Heart right ventricle (tissue), 16 donors: ENCODE measurements at regions of chr2 and their contacts with region 1.

Region 1: DNA sequence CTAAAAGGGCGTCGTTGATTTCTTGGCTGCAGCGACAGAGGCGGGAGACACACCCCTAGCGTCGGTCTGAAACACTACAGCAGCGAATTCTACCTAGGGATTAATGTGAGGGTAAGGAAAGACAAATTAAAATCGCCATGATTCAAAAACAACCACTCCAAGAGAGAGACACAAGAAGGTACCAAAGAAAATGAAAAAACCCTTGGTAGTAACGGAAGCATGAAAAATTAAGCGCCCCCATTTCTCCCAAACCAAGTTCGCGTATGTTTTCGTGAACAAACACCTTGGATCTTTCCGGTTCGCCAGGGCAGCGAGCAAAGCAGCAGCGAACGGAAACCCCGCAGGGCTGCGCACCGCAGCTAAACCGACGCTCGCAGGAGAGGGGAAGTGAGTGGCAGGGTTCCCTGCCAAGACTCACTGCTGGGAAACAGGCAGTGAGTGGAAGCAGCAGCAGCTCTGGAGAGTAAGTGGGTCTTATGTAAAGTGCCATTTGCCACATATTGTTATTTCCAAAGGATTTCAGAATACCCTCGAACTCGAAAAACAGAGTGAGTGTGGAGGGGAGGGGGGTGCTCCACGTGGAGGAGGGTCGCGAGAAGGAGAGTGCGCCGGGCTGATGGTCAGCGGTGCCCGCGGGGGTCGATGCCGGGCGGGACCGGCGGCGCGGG is 1.0 kb downstream of the PPP3R1 start:
- DNase-seq: peak; percentile 45 to 76
- ATAC-seq: peak; percentile 42 to 73 (median 64)
- H3K4me3 ChIP-seq: peak overlapping the region; percentile 54 to 83 (median 76)
- H3K27ac ChIP-seq: peak overlapping the region; percentile 85 to 99 (median 93)
- H3K4me1 ChIP-seq: peaks cover 6 to 74% (median 59%) of the 10 kb centered on the region in 9 donors
- H3K27me3 ChIP-seq: no peaks in the 10 kb centered on the region
- CTCF ChIP-seq: peak in 8 of 9 donors; percentile 50 to 80 (median 71)

Region 2: DNA sequence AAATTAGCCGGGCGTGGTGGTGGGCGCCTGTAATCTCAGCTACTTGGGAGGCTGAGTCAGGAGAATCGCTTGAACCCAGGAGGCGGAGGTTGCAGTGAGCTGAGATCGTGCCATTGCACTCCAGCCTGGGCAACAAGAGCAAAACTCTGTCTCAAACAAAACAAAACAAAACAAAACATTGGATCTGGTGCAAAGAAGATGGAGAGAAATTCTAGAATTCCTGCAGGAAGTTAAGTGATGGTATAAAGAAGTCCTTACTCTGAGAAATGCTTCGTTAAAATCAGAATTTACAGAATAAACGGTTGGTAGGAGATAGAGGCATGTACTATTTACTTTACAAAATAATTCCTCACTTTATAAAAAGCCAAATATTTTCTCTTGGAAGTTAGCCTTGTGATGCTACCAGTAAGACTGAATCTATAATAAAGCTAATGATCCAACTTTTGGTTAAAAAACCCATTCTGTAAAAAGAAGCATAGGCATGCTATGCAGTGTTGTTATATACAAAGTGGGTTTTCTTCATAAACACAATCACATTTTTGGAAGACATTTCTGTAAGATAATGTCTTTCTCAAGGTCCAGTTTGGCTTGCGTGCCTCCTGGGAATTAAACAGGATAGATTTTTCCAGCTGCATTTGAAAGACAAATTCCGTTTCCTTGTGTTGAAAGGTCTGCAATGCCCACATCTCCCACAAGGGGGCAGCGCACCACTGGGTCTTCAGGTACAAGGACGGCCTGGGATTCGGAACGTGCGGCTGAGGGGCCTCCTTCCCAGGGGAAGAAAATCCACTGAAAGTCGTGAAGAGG is 129.2 kb before region 1 on chr2:
- intact Hi-C with region 1: loop called in 2 of 10 experiments (anchors 10 kb)
- DNase-seq: peak; percentile 86 to 88
- ATAC-seq: peak in 7 of 8 donors; percentile 64 to 87 (median 84)
- H3K4me3 ChIP-seq: peak overlapping the region in 2 of 10 donors; percentile 5 to 14
- H3K27ac ChIP-seq: no peak overlapping the region
- H3K4me1 ChIP-seq: peaks cover 0 to 13% (median 8%) of the 10 kb centered on the region in 9 donors
- H3K27me3 ChIP-seq: no peaks in the 10 kb centered on the region
- CTCF ChIP-seq: peak in 8 of 9 donors; percentile 92 to 98 (median 98)

Region 3: GRCh38 chr2:68196120-68196716 is 55.1 kb before region 1 on chr2:
- intact Hi-C with region 1: loop called in 8 of 10 experiments (anchors 2 to 10 kb)
- DNase-seq: peak in 1 of 2 donors; percentile 35
- ATAC-seq: peak in 2 of 8 donors; percentile 23 to 52
- H3K4me3 ChIP-seq: no peak overlapping the region
- H3K27ac ChIP-seq: no peak overlapping the region
- H3K4me1 ChIP-seq: peaks cover 0 to 79% (median 25%) of the 10 kb centered on the region in 9 donors
- H3K27me3 ChIP-seq: no peaks in the 10 kb centered on the region
- CTCF ChIP-seq: peak in 8 of 9 donors; percentile 50 to 85 (median 73)

Region 4: DNA sequence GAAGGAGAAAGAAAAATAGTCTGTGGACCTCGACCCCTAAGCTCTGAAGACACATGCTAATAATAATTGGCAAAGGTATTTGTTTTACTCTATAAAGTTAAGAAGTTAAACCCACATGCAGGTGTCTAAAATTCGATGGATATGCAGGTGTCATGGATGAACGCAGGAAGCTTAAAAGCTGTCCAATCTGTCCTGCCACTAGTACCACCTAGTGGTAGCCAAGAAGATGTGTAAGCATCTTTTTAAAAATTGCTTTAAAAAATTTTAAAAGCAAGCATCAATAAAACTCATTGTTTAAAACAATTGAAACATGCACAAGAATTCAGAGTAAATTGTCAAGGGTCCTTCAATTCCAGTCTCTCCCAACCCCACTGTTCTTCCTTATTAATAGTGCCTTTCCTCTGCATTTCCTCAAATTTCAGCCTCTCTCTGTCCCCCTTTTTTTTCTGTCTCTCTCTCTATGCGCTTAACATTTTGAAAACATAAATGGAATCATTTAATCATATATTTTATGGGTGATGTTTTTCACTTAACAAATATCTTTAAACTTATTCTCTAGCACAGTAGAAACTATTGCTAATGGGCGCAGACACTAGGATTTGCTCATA is 31.6 kb after region 1 on chr2:
- intact Hi-C with region 1: loop called in 1 of 10 experiments (anchors 5 kb)
- DNase-seq: no peak
- ATAC-seq: peak in 1 of 8 donors; percentile 59
- H3K4me3 ChIP-seq: no peak overlapping the region
- H3K27ac ChIP-seq: no peak overlapping the region
- H3K4me1 ChIP-seq: peaks cover 0 to 38% (median 18%) of the 10 kb centered on the region in 9 donors
- H3K27me3 ChIP-seq: no peaks in the 10 kb centered on the region
- CTCF ChIP-seq: peak; percentile 49 to 84 (median 74)

Region 5: GRCh38 chr2:68319398-68320117 is 68.2 kb after region 1 on chr2 and contains the start of gene CNRIP1:
- intact Hi-C with region 1: loop called in 2 of 10 experiments (anchors 2 to 5 kb)
- DNase-seq: peak; percentile 77 to 87
- ATAC-seq: peak; percentile 84 to 95 (median 88)
- H3K4me3 ChIP-seq: peak within 1 kb of the TSS; percentile 61 to 93 (median 82)
- H3K27ac ChIP-seq: peak within 1 kb of the TSS; percentile 93 to 99 (median 98)
- H3K4me1 ChIP-seq: peaks cover 0 to 31% (median 20%) of the 10 kb centered on the region in 9 donors
- H3K27me3 ChIP-seq: peaks cover 0 to 27% (median 0%) of the 10 kb centered on the region in 7 donors
- CTCF ChIP-seq: peak in 3 of 9 donors; percentile 12 to 23 (median 20)
- total RNA-seq, gene CNRIP1: 4.8 to 13.4 (median 7.9) TPM

Region 6: DNA sequence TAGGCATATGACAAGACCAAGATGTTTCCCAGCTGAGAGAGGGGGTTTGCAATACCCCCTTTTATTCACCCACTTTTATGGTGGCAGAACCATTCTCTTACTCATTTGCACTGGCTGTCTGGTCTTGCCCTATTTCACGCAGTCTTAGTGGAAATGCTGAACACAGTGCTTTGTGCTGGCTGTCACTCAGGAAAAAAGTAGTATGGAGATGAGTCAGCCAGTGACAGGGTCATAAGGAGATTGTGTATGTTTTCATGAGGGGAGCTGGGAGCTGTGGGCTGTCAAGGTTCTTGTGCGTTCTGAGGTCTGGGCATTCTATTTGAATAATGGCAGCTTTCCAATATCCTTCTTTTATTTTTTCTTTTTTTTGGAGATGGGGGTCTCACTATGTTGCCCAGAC is 79.4 kb after region 1 on chr2:
- intact Hi-C with region 1: no loop called
- DNase-seq: no peak
- ATAC-seq: no peak
- H3K4me3 ChIP-seq: no peak overlapping the region
- H3K27ac ChIP-seq: no peak overlapping the region
- H3K4me1 ChIP-seq: no peaks in the 10 kb centered on the region
- H3K27me3 ChIP-seq: peaks cover 0 to 30% (median 8%) of the 10 kb centered on the region in 7 donors
- CTCF ChIP-seq: no peak